Transverse colon (tissue), 4 donors: ENCODE measurements at regions of chr12 and their contacts with region 1.

Region 1: DNA sequence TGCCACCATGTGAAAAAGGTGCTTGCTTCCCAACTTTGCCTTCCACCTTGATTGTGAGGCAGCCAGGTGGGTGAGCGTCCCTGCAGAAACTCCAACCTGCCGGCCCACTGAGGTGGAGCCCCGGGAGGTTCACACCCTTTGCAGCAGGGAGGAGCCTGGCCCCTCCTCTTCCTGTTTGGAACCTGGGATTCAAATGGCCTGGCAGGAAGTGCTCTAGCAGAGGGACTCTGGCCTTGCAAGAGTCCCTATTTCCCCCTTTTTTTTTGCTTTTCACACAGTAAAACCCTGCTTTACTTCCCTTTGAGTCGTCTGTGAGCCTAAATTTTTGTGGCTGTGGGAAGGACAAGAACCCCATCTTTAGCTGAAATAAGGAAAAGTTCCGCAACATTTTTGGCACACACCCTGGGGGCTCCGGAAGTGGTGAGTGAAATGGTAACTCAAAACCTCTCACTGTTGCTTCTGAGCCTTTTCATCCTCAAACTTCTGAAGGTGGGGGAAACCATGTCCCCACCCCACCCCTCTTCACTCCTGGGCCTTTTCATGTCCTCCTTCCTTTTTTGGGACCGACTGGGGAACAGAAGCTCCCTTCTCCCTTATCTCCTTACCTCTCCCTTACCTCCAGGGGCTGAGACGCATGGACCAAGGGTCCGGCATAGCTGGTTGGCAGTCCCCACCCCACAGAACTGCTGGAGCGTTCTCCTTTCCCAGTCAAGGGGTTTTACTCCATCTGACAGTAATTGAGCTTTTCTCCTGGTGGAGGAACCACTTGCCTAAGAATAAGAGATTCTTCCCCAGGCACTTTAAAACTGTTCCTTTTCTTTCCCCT is 102.0 kb downstream of the KCNMB4 start:
- DNase-seq: peak; percentile 8
- H3K4me3 ChIP-seq: no peak overlapping the region
- H3K27ac ChIP-seq: peak overlapping the region in 1 of 4 donors; percentile 0
- H3K4me1 ChIP-seq: no peaks in the 10 kb centered on the region
- H3K27me3 ChIP-seq: no peaks in the 10 kb centered on the region
- CTCF ChIP-seq: no peak
- EP300 ChIP-seq: no peak
- POLR2A ChIP-seq: no peak

Region 2: GRCh38 chr12:70418101-70418500 is 50.0 kb before region 1 on chr12:
- in situ Hi-C with region 1: no loop called
- intact Hi-C with region 1: no loop called
- DNase-seq: no peak
- H3K4me3 ChIP-seq: no peak overlapping the region
- H3K27ac ChIP-seq: no peak overlapping the region
- H3K4me1 ChIP-seq: no peaks in the 10 kb centered on the region
- H3K27me3 ChIP-seq: no peaks in the 10 kb centered on the region
- CTCF ChIP-seq: no peak
- EP300 ChIP-seq: no peak
- POLR2A ChIP-seq: no peak

Region 3: DNA sequence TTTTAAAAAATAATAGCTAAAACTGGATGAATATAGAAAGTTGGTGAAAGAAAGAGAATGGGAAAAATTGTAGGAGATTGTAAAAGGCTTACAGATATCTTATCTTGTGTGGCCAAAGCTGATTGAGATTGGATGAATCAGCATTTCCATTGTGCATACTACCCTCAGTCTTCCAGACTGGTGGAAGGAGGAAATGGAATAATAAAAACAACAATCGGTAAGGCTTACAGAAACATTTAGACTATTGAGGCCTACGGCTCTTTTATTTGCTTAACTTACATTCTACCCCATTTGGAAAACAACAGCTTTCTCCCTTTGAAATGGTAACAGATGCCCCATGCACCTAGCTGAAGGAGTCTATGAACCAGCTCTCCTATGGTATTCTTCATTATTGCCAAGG is 39.3 kb after region 1 on chr12:
- in situ Hi-C with region 1: no loop called
- intact Hi-C with region 1: loop called (anchors 1 kb)
- DNase-seq: no peak
- H3K4me3 ChIP-seq: no peak overlapping the region
- H3K27ac ChIP-seq: no peak overlapping the region
- H3K4me1 ChIP-seq: no peaks in the 10 kb centered on the region
- H3K27me3 ChIP-seq: no peaks in the 10 kb centered on the region
- CTCF ChIP-seq: no peak
- EP300 ChIP-seq: no peak
- POLR2A ChIP-seq: no peak

Region 4: GRCh38 chr12:70628701-70629480 is 160.8 kb after region 1 on chr12:
- in situ Hi-C with region 1: no loop called
- intact Hi-C with region 1: no loop called
- DNase-seq: no peak
- H3K4me3 ChIP-seq: no peak overlapping the region
- H3K27ac ChIP-seq: no peak overlapping the region
- H3K4me1 ChIP-seq: no peaks in the 10 kb centered on the region
- H3K27me3 ChIP-seq: no peaks in the 10 kb centered on the region
- CTCF ChIP-seq: no peak
- EP300 ChIP-seq: no peak
- POLR2A ChIP-seq: no peak